Natural killer cell (primary cell): ENCODE measurements at regions of chr3 and their contacts with region 1.

Region 1: DNA sequence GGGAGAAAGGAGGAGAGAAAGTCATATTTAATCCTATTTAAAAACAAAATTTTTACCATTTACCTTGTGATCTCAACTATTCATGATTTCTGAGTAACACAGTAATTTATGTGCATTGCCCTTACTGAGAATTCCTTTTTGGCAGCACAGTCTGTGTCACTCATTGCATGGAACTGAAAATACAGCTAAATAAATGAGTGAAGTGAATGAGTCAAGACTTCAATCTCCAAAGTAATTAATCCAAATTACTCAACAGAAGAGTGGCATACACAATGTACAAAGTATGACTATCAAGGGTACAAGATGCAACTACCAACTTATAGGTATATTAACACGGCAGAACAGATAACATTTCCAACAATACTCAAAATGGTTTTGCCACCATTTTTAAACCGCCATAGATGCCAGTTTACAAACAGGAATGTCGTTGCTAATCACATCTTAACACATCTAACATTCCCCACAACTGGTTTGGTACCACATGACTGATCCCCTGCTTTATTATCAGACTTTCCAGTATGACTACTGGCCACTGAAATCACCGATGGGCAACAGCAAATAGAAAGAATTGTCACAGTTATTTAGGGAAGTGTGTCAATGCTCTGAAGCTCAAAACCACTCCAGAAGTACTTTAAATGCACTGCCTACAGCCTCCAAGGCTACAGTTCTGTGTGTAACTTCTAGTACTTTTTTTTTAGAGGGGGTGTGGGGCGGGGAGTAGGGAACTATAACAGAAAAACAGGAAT is 410.4 kb downstream of the SHQ1 start:
- DNase-seq: no peak
- ATAC-seq: no peak
- H3K4me3 ChIP-seq: no peak overlapping the region
- H3K4me3 Mint-ChIP-seq: no peak overlapping the region
- H3K27ac ChIP-seq: no peak overlapping the region
- H3K27ac Mint-ChIP-seq: no peak overlapping the region
- H3K4me1 ChIP-seq: peaks cover 4% of the 10 kb centered on the region
- H3K4me1 Mint-ChIP-seq: peaks cover 57 to 63% of the 10 kb centered on the region in 2 donors
- H3K27me3 ChIP-seq: no peaks in the 10 kb centered on the region
- H3K27me3 Mint-ChIP-seq: no peaks in the 10 kb centered on the region
- CTCF ChIP-seq: no peak

Region 2: DNA sequence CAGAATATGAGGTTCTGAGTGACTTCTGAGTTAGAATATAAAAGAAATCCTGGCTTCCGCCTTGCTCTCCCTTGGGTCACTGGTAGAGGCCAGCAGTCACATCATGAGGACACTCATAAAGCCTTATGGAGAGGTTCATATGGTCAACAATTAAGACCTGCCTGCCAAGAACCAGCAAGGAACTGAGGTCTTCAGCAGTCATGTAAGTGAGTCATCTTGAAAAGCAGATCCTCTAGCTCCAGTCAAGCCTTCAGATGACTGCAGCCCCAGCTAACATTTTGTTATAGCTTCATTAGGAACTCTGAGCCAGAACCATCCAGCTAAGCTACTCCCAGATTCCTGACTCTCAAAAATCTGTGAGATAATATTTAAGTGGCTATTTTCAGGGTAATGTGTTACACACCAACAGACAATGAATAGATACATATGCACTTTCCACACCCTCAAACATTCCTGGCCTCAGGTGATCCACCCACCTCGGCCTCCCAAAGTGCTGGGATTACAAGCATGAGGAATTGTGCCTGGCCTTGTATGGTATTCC is 36.8 kb before region 1 on chr3:
- intact Hi-C with region 1: no loop called
- DNase-seq: no peak
- ATAC-seq: no peak
- H3K4me3 ChIP-seq: no peak overlapping the region
- H3K4me3 Mint-ChIP-seq: no peak overlapping the region
- H3K27ac ChIP-seq: no peak overlapping the region
- H3K27ac Mint-ChIP-seq: no peak overlapping the region
- H3K4me1 ChIP-seq: no peaks in the 10 kb centered on the region
- H3K4me1 Mint-ChIP-seq: peaks cover 76 to 79% of the 10 kb centered on the region in 2 donors
- H3K27me3 ChIP-seq: no peaks in the 10 kb centered on the region
- H3K27me3 Mint-ChIP-seq: no peaks in the 10 kb centered on the region
- CTCF ChIP-seq: no peak

Region 3: GRCh38 chr3:72421126-72421525 is 16.7 kb before region 1 on chr3:
- intact Hi-C with region 1: loop called (anchors 2 kb)
- DNase-seq: no peak
- ATAC-seq: no peak
- H3K4me3 ChIP-seq: no peak overlapping the region
- H3K4me3 Mint-ChIP-seq: no peak overlapping the region
- H3K27ac ChIP-seq: no peak overlapping the region
- H3K27ac Mint-ChIP-seq: no peak overlapping the region
- H3K4me1 ChIP-seq: peaks cover 3% of the 10 kb centered on the region
- H3K4me1 Mint-ChIP-seq: peaks cover 72 to 80% of the 10 kb centered on the region in 2 donors
- H3K27me3 ChIP-seq: no peaks in the 10 kb centered on the region
- H3K27me3 Mint-ChIP-seq: no peaks in the 10 kb centered on the region
- CTCF ChIP-seq: no peak